AG04450 (cell line): ENCODE measurements at regions of chr1 and their contacts with region 1.

Region 1: GRCh38 chr1:161225534-161226319 is at the start of gene TOMM40L:
- DNase-seq: peak; percentile 100
- H3K4me3 ChIP-seq: peak within 1 kb of the TSS; percentile 97
- H3K27ac ChIP-seq: no peak within 1 kb of the TSS
- H3K27me3 ChIP-seq: no peaks in the 10 kb centered on the region
- CTCF ChIP-seq: peak; percentile 76
- polyA plus RNA-seq, gene TOMM40L: 9.3 and 9.9 TPM in 2 replicates

Region 2: GRCh38 chr1:160779626-160780397 is 445.9 kb before region 1 on chr1:
- CTCF ChIA-PET with region 1: no interaction called
- POLR2A ChIA-PET with region 1: no interaction called
- DNase-seq: no peak
- H3K4me3 ChIP-seq: no peak overlapping the region
- H3K27ac ChIP-seq: no peak overlapping the region
- H3K27me3 ChIP-seq: no peaks in the 10 kb centered on the region
- CTCF ChIP-seq: peak; percentile 16; the same call in 1 of the 2 replicates

Region 3: GRCh38 chr1:161165742-161166668 is 59.7 kb before region 1 on chr1 and contains the start of gene PPOX:
- CTCF ChIA-PET with region 1: interaction called, 18 read pairs
- POLR2A ChIA-PET with region 1: no interaction called
- DNase-seq: peak; percentile 93
- H3K4me3 ChIP-seq: peak within 1 kb of the TSS; percentile 86
- H3K27ac ChIP-seq: peak within 1 kb of the TSS; percentile 93
- H3K27me3 ChIP-seq: no peaks in the 10 kb centered on the region
- CTCF ChIP-seq: peak; percentile 55
- polyA plus RNA-seq, gene PPOX: 9.7 and 9.8 TPM in 2 replicates

Region 4: GRCh38 chr1:161201828-161202725 is 23.6 kb before region 1 on chr1 and contains the start of gene NDUFS2:
- CTCF ChIA-PET with region 1: interaction called, 87 read pairs
- POLR2A ChIA-PET with region 1: interaction called, 13 read pairs
- DNase-seq: peak; percentile 98
- H3K4me3 ChIP-seq: peak within 1 kb of the TSS; percentile 96
- H3K27ac ChIP-seq: peak within 1 kb of the TSS; percentile 99
- H3K27me3 ChIP-seq: no peaks in the 10 kb centered on the region
- CTCF ChIP-seq: peak; percentile 23
- polyA plus RNA-seq, gene NDUFS2: 150 and 155 TPM in 2 replicates

Region 5: GRCh38 chr1:161258439-161259344 is 33.0 kb after region 1 on chr1 and contains the start of gene PCP4L1:
- CTCF ChIA-PET with region 1: interaction called, 10 read pairs
- POLR2A ChIA-PET with region 1: no interaction called
- DNase-seq: no peak
- H3K4me3 ChIP-seq: peak within 1 kb of the TSS; percentile 51
- H3K27ac ChIP-seq: no peak within 1 kb of the TSS
- H3K27me3 ChIP-seq: peaks cover 40% of the 10 kb centered on the region
- CTCF ChIP-seq: no peak
- polyA plus RNA-seq, gene PCP4L1: not detected in 2 replicates

Region 6: DNA sequence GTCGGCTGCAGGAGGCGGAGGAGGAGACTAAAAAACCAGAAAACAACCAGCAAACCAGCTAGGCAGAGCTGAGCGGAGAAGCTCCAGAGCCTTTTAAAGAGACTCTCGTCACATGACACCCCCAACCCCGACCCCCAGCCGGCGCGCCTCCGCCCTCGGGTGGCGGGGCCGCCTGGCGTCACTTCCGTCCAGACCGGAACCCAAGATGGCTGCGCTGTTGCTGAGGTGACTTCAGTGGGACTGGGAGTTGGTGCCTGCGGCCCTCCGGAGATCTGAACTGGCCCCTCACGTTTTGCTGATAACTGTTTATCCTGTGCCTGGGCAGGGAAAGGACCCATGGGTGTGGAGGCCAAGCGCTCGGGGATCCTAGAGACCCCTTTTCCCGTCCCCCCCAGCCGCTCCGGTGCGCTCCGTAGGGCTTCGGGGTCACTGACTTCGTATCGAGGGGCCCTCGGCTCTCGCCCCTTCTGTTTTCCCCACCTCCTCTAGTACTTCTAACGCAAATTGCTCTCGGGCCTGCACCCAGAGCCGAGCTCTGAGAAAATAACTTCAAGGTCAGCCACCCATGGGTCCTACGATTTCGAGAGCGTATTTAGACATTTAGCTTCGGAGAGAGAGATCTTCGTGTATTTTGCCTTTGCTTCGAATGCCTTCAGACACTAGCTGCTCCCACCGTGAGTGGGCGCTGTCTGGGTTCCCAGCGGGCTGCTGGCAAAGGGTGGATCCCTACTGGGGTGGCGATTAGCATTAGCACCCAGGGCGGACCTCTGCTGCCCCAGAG is 88.7 kb after region 1 on chr1 and contains the start of gene SDHC:
- CTCF ChIA-PET with region 1: interaction called, 4 read pairs
- POLR2A ChIA-PET with region 1: interaction called, 12 read pairs
- DNase-seq: peak; percentile 61
- H3K4me3 ChIP-seq: peak within 1 kb of the TSS; percentile 96
- H3K27ac ChIP-seq: peak within 1 kb of the TSS; percentile 87
- H3K27me3 ChIP-seq: peaks cover 12% of the 10 kb centered on the region
- CTCF ChIP-seq: peak; percentile 45
- polyA plus RNA-seq, gene SDHC: 311 and 335 TPM in 2 replicates

Region 7: DNA sequence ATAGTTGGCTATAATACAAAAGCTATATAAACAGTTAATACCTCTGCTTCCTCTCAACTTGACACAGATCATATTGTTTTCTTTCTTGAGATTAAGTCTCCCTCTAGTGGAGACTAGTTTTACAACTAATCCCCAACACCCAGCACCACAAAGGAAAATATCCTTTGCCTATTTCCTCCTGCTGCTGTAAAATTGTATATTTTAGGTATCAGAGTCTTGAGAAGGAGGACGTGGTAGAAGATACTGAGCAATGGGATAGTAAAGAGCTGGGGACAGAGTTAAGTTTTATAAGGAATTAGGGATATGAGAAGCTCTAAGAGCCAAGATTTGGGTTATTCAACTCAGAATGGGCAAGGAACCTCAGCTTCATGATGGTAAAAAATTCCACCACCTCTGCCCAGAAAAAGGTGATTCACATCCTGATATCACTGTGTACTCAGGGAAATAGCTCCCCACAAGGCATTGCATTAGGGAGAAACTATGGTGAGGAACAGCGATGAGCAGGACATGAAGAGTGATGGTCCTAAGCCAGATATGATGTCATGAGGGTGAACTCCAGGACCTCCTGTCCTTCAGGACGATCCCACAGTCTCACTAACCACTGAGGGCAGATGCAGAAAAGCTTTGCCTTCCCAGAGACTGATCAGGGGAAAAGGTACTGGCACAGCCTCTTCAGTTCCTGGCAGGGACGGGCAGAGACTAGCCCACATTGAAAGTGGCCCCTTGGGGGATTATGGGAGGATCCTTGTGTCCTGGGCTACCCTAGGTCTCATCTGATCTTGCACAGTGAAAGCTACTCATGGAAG is 156.7 kb after region 1 on chr1:
- CTCF ChIA-PET with region 1: interaction called, 197 read pairs
- POLR2A ChIA-PET with region 1: no interaction called
- DNase-seq: no peak
- H3K4me3 ChIP-seq: no peak overlapping the region
- H3K27ac ChIP-seq: peak overlapping the region; percentile 34
- H3K27me3 ChIP-seq: no peaks in the 10 kb centered on the region
- CTCF ChIP-seq: peak; percentile 65